PC-3 (cell line): ENCODE measurements at regions of chr1 and their contacts with region 1.

Region 1: DNA sequence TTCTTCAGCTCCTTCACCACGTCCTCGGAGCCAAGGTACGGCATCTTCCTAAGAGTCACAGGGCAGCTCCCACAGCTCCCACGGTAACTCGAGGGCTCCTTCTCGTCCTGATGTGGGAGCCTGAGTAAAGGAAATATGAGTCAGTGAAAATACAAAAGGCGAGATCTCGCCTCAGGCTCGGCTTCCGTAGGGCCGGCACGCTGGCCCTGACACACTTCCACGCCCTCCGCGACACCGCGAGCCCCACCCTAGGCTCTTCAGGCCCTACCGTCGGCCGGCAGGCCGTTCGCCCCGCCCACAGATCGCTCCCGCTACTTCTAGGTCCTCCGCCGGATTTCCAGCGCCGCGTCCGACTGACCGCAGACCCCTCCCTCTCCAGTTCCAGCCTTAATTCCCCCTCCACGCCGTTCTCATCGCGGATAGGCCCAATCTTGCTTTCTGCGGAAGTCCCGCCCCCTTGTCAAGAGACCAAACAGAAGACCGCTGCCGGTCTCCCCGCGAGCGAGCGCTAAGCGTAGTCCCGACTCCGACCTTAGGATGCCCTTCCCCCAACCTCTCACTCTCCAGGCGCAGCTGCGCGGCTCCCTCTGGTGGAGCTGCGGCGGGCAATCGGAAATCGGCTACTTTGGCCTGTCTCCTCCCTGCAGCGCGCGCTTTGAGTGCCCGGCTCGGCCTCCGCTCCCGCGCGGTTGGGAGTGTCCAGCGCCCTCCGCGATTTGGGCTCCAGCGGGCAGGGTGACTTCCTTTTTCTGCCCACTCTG is at the starts of genes AP4B1 and DCLRE1B:
- DNase-seq: peak; percentile 99
- ATAC-seq: peak; percentile 90
- H3K4me3 ChIP-seq: peak within 1 kb of the TSS; percentile 97
- H3K27ac ChIP-seq: peak within 1 kb of the TSS; percentile 70
- H3K4me1 ChIP-seq: peaks cover 18% of the 10 kb centered on the region
- H3K27me3 ChIP-seq: no peaks in the 10 kb centered on the region
- CTCF ChIP-seq: peak; percentile 59
- total RNA-seq, gene AP4B1: 15.5 and 15.8 TPM in 2 replicates
- total RNA-seq, gene DCLRE1B: 12.6 and 13.2 TPM in 2 replicates

Region 2: GRCh38 chr1:112982853-112983536 is 921.9 kb before region 1 on chr1:
- CTCF ChIA-PET with region 1: no interaction called
- POLR2A ChIA-PET with region 1: no interaction called
- intact Hi-C with region 1: no loop called
- DNase-seq: no peak
- ATAC-seq: no peak
- H3K4me3 ChIP-seq: no peak overlapping the region
- H3K27ac ChIP-seq: no peak overlapping the region
- H3K4me1 ChIP-seq: peaks cover 3% of the 10 kb centered on the region
- H3K27me3 ChIP-seq: no peaks in the 10 kb centered on the region
- CTCF ChIP-seq: no peak

Region 3: DNA sequence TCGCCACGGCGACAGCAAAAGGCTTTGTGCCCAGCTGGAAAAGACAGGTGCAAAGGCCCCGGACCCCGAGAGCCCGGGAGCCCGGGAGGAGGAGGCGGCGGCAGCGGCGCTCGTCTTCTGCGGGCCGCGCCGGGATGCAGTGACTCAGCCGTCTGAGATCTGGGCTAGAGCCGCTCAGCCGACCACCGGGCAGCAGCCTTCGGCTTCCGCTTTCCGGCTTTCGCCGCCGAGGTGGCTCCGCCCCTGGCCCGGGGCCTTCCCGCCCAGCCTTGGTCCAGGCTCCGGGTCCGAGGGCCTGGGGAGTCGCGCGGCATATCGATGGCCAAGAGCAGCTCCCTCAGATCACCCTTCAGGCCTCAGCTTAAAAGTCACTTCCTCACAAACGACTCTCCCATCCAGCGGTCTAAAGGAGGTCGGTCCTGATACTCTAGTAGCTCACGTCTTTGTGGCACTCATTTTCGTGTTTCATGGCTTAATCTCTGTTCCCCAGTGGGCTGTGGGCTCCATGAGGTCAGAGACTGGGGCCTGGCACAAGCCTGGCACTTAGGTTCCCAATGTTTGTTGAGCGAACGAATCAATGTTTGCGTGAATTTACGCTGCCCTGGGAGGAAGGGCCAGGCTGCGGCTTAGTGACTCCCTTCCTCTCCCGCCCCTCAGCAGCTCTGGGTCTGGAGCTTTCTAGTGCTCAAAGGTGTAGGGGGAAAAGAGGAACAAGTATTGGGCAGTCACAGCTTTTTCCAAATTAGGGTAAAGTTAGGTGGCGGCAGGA is 145.3 kb before region 1 on chr1 and contains the start of gene PHTF1:
- CTCF ChIA-PET with region 1: no interaction called
- POLR2A ChIA-PET with region 1: no interaction called
- intact Hi-C with region 1: loop called (anchors 5 kb)
- DNase-seq: peak; percentile 78
- ATAC-seq: peak; percentile 84
- H3K4me3 ChIP-seq: peak within 1 kb of the TSS; percentile 91
- H3K27ac ChIP-seq: peak within 1 kb of the TSS; percentile 80
- H3K4me1 ChIP-seq: peaks cover 5% of the 10 kb centered on the region; the same call in 1 of the 2 replicates
- H3K27me3 ChIP-seq: no peaks in the 10 kb centered on the region
- CTCF ChIP-seq: no peak
- total RNA-seq, gene PHTF1: 23.4 and 27.3 TPM in 2 replicates

Region 4: GRCh38 chr1:113811888-113812660 is 92.8 kb before region 1 on chr1 and contains the start of gene RSBN1:
- CTCF ChIA-PET with region 1: no interaction called
- POLR2A ChIA-PET with region 1: no interaction called
- intact Hi-C with region 1: loop called (anchors 1 kb)
- DNase-seq: peak; percentile 99
- ATAC-seq: peak; percentile 93
- H3K4me3 ChIP-seq: peak within 1 kb of the TSS; percentile 92
- H3K27ac ChIP-seq: peak within 1 kb of the TSS; percentile 59
- H3K4me1 ChIP-seq: peaks cover 29% of the 10 kb centered on the region
- H3K27me3 ChIP-seq: no peaks in the 10 kb centered on the region
- CTCF ChIP-seq: no peak
- total RNA-seq, gene RSBN1: 8.4 and 11.7 TPM in 2 replicates

Region 5: DNA sequence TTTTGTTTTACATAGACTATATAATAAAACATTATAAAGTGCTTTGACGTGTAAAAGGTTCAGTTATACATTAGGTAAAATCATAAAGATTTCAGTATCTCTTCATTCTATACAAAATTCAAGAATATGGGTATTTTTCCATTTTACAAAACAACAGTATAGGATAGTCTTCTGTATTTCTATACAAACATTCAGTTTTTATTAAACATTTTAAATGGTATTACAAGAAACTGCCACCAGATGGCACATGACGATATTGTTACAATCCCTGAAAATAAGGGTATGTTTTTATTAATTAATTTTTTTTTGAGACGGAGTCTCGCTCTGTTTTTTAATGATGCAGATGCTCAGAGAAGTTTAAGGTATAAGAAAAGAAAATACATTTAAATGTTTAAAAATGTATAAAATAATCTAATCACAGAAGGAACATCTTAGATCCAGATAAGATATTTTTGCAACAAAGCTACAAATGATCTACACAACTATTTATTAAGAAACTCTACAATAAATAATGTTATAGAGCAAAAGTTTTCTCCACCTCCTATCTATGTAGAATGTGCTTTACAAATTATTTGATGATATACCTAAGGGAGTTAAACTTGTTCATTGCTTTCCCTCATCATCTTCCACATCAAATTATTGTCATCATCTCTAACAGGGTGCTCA is 69.1 kb before region 1 on chr1:
- CTCF ChIA-PET with region 1: no interaction called
- POLR2A ChIA-PET with region 1: no interaction called
- intact Hi-C with region 1: loop called (anchors 1 kb)
- DNase-seq: peak; percentile 75
- ATAC-seq: no peak
- H3K4me3 ChIP-seq: no peak overlapping the region
- H3K27ac ChIP-seq: no peak overlapping the region
- H3K4me1 ChIP-seq: no peaks in the 10 kb centered on the region
- H3K27me3 ChIP-seq: no peaks in the 10 kb centered on the region
- CTCF ChIP-seq: peak; percentile 62

Region 6: GRCh38 chr1:113928941-113929749 is 24.3 kb after region 1 on chr1 and contains the start of gene HIPK1:
- CTCF ChIA-PET with region 1: interaction called, 3 read pairs
- POLR2A ChIA-PET with region 1: interaction called, 10 read pairs
- intact Hi-C with region 1: loop called (anchors 1 kb)
- DNase-seq: peak; percentile 85
- ATAC-seq: peak; percentile 74
- H3K4me3 ChIP-seq: peak within 1 kb of the TSS; percentile 86
- H3K27ac ChIP-seq: peak within 1 kb of the TSS; percentile 41
- H3K4me1 ChIP-seq: peaks cover 32% of the 10 kb centered on the region
- H3K27me3 ChIP-seq: no peaks in the 10 kb centered on the region
- CTCF ChIP-seq: no peak
- total RNA-seq, gene HIPK1: 18.7 and 19.9 TPM in 2 replicates

Region 7: DNA sequence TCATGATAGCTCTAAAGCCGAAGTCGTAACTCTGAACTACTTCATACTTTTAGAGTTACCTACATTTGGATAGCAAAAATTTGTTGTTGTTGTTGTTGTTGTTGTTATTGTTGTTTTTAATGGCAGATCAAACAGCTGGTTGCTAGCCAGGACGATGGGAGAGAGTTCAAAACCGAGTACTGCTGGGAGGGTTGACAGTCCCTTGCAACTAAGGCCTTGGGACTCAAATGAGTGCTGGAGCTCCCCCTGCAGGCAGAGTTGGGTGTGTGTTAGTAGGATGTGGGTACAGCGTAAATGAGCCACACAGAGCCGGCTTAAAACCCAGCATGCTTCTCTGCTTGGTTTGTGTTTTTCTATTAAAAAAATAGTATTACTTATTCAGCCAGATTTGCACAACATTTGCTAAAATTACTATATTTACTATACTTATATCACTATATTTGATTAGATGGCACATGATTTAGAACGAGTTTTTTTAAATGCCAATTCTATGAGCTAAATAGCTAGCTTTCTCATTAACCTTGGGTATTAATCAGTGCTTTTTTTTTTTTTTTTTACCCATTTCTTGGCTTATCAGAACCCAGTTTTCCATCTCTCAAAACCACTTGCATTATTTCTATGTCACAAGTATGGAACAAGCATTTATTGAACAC is 378.0 kb after region 1 on chr1:
- CTCF ChIA-PET with region 1: no interaction called
- POLR2A ChIA-PET with region 1: no interaction called
- intact Hi-C with region 1: no loop called
- DNase-seq: peak; percentile 88
- ATAC-seq: peak; percentile 100
- H3K4me3 ChIP-seq: no peak overlapping the region
- H3K27ac ChIP-seq: no peak overlapping the region
- H3K4me1 ChIP-seq: no peaks in the 10 kb centered on the region
- H3K27me3 ChIP-seq: peaks cover 24% of the 10 kb centered on the region
- CTCF ChIP-seq: peak; percentile 91